ENCODE measurements at regions of chr12 and their contacts with region 1.

Region 1: DNA sequence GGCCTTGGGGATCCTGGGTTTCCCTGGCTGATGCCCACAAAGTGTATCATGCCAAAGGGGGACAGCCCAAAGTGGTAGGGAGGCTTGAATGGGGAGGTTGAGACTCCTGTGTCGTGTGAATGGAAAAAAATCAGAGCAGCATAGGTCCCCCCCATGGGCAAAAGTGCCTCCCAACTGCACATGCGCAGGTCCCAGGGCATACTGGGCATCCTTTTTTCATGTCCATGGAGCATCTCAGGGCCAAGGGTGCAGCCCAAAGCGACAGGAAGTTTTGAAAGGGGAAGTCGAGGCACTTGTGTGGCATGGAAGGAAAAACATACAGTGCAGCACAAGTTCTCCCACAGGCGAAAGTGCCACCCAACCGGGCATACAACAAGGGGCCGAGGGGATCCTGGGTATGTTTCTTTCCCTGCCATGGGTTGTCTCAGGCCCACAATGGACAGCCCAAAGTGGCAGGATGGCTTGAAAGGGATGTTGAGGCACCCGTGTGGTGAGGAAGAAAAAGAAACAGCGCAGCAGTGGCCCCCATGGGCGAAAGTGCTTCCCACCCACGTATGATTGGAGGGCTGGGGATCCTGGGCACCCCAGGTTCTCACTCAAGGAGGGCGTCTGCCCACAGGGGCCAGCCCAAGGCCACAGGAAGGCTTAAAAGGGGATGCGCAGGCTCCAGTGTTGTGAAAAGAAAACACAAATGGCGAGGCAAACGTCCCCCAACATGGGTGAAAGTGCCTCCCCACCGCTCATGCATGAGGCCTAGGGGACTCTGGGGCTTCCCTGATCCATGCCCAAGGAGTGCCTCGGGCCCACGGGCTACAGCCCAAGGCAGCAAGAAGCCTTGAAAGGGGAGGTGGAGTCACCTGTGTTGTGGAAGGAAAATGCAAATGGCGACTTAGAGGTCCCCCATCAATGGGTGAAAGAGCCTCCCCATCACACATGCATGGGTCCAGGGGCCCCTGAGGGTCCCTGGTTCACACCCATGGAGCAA is 573.7 kb downstream of the ALG10 start:
- DNase-seq: no peak
- ATAC-seq: no peak
- H3K4me3 ChIP-seq: no peak overlapping the region
- H3K27ac ChIP-seq: no peak overlapping the region
- H3K4me1 ChIP-seq: no peaks in the 10 kb centered on the region
- H3K27me3 ChIP-seq: no peaks in the 10 kb centered on the region
- CTCF ChIP-seq: no peak
- EP300 ChIP-seq: no peak
- POLR2A ChIP-seq: no peak
- RAD21 ChIP-seq: no peak

Region 2: GRCh38 chr12:34402228-34402898 is 193.7 kb before region 1 on chr12:
- CTCF ChIA-PET with region 1: no interaction called
- POLR2A ChIA-PET with region 1: no interaction called
- in situ Hi-C with region 1: loop called (anchors 25 kb)
- intact Hi-C with region 1: no loop called
- DNase-seq: no peak
- ATAC-seq: no peak
- H3K4me3 ChIP-seq: no peak overlapping the region
- H3K27ac ChIP-seq: no peak overlapping the region
- H3K4me1 ChIP-seq: no peaks in the 10 kb centered on the region
- H3K27me3 ChIP-seq: no peaks in the 10 kb centered on the region; a peak in 2 of 5 replicates
- CTCF ChIP-seq: no peak
- EP300 ChIP-seq: no peak
- POLR2A ChIP-seq: no peak
- RAD21 ChIP-seq: no peak

Region 3: DNA sequence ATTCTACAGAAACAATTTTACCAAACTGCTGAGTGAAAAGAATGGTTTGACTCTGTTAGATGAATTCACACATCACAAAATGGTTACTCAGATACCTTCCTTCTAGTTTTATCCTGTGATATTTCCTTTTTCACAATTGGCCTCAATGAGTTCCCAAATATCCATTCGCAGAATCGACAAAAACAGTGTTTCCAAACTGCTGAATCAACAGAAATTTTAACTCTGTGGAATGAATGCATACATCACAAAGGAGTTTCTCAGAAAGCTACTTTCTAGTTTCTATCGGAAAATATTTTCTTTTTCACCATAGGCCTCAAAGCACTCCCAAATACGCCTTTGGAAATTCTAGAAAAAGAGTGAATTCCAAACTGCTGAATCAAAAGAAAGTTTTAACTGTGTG is 48.8 kb before region 1 on chr12:
- CTCF ChIA-PET with region 1: no interaction called
- POLR2A ChIA-PET with region 1: no interaction called
- in situ Hi-C with region 1: no loop called
- intact Hi-C with region 1: no loop called
- DNase-seq: no peak
- ATAC-seq: no peak
- H3K4me3 ChIP-seq: no peak overlapping the region
- H3K27ac ChIP-seq: no peak overlapping the region
- H3K4me1 ChIP-seq: no peaks in the 10 kb centered on the region
- H3K27me3 ChIP-seq: no peaks in the 10 kb centered on the region
- CTCF ChIP-seq: no peak
- EP300 ChIP-seq: no peak
- POLR2A ChIP-seq: no peak
- RAD21 ChIP-seq: no peak

Measured in HepG2 (cell line).